ENCODE measurements at regions of chr2 and their contacts with region 1.

Region 1: DNA sequence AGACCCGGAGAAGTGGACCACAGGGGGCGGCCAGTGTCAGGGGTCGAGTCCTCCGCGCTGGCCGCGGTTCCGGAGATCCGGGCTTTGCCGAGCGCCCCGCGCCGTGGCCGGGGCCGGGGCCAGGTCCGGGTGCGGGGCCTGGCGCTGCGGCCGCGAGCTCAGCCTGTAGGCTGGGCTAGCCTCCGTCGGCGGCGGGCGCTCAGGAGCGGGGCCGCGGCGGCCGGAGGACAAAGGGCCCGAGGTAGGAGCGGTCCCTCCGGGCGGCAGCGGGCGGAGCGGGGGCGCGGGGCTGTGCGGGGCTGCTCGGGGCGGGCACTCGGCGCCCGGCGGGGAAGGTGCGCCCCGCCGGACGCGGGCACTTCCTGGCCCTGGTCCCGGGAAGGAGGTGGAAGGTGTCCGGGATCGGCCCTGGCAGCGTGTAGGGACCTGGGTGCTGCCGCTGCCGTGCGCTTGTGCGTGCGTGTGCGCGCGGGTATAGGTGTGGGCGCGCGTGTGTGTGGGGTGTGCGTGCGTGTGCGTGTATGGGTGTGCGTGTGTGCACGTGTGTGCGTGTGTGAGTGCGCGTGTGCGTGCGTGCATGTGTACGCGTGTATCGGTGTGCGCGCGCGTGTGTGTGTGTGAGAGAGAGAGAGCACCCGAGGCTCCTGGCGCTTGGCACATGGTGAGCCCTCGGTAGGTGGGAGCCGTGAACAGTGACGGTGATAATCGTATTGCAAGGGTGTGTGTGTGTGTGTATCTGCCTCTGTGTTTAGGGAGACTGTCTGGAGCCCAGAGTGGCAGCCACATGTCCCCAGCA is 17.0 kb upstream of the E2F6 start:
- DNase-seq: peak; percentile 47 to 51
- H3K4me3 ChIP-seq: peak overlapping the region; percentile 58 to 73
- H3K27ac ChIP-seq: peak overlapping the region; percentile 88 to 95
- H3K4me1 ChIP-seq: peaks cover 0 to 5% of the 10 kb centered on the region in 2 donors
- H3K27me3 ChIP-seq: no peaks in the 10 kb centered on the region
- CTCF ChIP-seq: peak in 1 of 4 experiments; percentile 31
- POLR2A ChIP-seq: peak in 1 of 2 donors; percentile 45

Region 2: DNA sequence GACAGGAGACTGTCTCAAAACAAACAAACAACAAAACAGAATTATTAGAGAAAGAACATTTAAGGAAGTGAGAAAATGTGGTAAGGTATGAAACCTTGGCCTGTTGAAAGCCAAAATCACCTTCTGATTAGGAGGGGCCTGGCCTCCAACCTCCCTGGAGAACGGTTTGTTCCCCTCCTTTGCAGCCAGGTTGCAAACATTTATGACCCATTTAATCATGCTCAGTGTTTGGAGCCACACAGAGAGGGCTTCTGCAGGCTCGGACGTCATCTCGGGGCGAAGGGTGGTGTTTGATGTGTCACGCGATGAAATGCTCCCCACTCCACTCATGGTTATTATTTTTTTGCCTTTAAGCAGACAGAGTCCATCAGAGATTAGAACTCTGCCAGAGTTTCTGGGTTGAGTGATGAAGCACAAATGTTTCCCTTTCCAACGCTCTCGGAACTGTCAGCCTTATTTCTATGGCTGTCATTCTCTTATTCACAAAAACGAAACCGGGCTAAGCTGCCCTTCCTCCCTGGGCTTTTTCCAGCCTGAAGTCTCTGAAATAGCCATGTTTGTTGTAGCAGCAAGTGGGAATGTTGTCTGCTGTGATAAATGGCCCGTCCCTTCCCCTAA is 104.9 kb before region 1 on chr2:
- intact Hi-C with region 1: no loop called
- DNase-seq: peak; percentile 70 to 79
- H3K4me3 ChIP-seq: peak overlapping the region; percentile 11 to 17
- H3K27ac ChIP-seq: peak overlapping the region; percentile 89 to 90
- H3K4me1 ChIP-seq: peaks cover 0 to 11% of the 10 kb centered on the region in 2 donors
- H3K27me3 ChIP-seq: no peaks in the 10 kb centered on the region
- CTCF ChIP-seq: no peak
- POLR2A ChIP-seq: no peak

Region 3: GRCh38 chr2:11589316-11589940 is 106.5 kb after region 1 on chr2:
- intact Hi-C with region 1: loop called (anchors 5 kb)
- DNase-seq: no peak
- H3K4me3 ChIP-seq: no peak overlapping the region
- H3K27ac ChIP-seq: no peak overlapping the region
- H3K4me1 ChIP-seq: no peaks in the 10 kb centered on the region
- H3K27me3 ChIP-seq: no peaks in the 10 kb centered on the region
- CTCF ChIP-seq: no peak
- POLR2A ChIP-seq: no peak